ENCODE measurements at regions of chr4 and their contacts with region 1.

Region 1: GRCh38 chr4:1329408-1330371 is 17.3 kb upstream of the UVSSA start:
- DNase-seq: peak; percentile 44
- H3K4me3 Mint-ChIP-seq: peak overlapping the region; percentile 32
- H3K27ac Mint-ChIP-seq: peak overlapping the region; percentile 83
- H3K4me1 Mint-ChIP-seq: peaks cover 39% of the 10 kb centered on the region
- H3K27me3 Mint-ChIP-seq: no peaks in the 10 kb centered on the region

Region 2: GRCh38 chr4:1309261-1310010 is 20.3 kb before region 1 on chr4:
- CTCF ChIA-PET with region 1: no interaction called
- POLR2A ChIA-PET with region 1: no interaction called
- intact Hi-C with region 1: loop called (anchors 2 kb)
- DNase-seq: peak; percentile 74
- H3K4me3 Mint-ChIP-seq: peak overlapping the region; percentile 48
- H3K27ac Mint-ChIP-seq: peak overlapping the region; percentile 69
- H3K4me1 Mint-ChIP-seq: peaks cover 65% of the 10 kb centered on the region
- H3K27me3 Mint-ChIP-seq: no peaks in the 10 kb centered on the region

Region 3: GRCh38 chr4:1318488-1319213 is 11.0 kb before region 1 on chr4:
- CTCF ChIA-PET with region 1: interaction called, 10 read pairs
- POLR2A ChIA-PET with region 1: no interaction called
- intact Hi-C with region 1: no loop called
- DNase-seq: peak; percentile 33
- H3K4me3 Mint-ChIP-seq: no peak overlapping the region
- H3K27ac Mint-ChIP-seq: no peak overlapping the region
- H3K4me1 Mint-ChIP-seq: peaks cover 10% of the 10 kb centered on the region
- H3K27me3 Mint-ChIP-seq: no peaks in the 10 kb centered on the region

Region 4: DNA sequence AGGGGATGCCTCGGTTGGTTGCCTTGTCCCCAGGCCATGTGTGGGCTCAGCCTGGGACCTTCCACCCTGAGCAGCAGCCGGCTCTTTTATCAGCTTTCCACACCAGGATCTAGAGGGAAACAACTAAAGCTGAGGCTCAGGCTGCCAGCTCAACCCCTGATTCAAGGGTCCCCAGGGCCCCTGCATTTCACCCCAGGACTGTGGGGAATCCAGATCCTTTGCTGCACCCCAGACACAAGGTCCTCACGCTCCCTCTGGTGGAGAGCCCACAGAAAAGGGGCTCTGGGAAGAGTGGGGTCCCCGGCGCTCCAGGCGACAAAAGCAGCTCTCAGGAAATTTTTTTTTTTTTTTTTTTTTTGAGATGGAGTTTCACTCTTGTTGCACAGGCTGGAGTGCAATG is 1024.4 kb after region 1 on chr4:
- CTCF ChIA-PET with region 1: no interaction called
- POLR2A ChIA-PET with region 1: no interaction called
- intact Hi-C with region 1: no loop called
- DNase-seq: no peak
- H3K4me3 Mint-ChIP-seq: no peak overlapping the region
- H3K27ac Mint-ChIP-seq: no peak overlapping the region
- H3K4me1 Mint-ChIP-seq: peaks cover 5% of the 10 kb centered on the region
- H3K27me3 Mint-ChIP-seq: no peaks in the 10 kb centered on the region